ENCODE measurements at regions of chr12 and their contacts with region 1.

Region 1: DNA sequence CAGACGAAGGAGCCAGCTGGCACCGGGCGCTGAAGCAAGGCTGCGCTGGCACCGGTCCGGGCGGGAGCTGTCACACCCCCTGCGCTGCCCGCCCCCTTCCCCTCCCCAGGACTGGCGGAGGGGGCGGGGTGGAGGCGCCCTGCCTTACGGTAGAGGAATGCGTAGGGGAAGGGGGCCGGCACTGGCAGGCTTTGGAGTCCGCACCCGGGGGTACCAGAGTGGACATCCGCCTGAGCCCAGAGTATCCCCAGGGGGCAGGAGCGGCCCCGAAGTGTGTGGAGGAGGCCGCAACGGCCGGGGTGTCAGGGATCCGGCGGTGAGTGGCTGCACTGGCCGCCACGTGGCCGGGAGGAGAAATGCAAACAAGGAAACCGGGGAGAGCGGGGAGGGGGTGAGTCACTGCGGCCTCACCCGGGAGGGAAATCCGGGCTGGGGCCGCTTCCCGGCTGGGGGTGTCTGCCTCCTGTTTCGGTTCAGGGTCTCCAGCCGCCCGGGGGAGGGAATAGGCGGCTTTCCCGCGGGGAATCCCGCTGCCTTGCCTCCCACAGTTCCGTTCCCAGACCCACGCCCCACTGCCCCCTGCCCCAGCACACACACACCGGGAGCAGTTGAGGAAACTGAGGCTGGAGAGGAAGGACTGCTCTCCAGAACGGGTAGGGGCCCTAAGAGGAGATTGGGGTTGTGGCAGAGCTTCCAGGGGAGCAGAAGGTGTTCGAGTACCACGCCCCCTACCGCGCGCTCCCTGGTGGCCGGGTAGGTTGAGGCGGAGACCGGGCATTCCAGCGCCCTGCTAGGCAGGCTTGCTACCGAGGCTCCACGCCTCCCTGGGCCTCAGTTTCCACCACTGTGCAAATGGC is at the start of gene RAPGEF3:
- DNase-seq: no peak
- H3K4me3 ChIP-seq: peak within 1 kb of the TSS; percentile 53
- H3K27me3 ChIP-seq: no peaks in the 10 kb centered on the region
- CTCF ChIP-seq: peak; percentile 65
- polyA plus RNA-seq, gene RAPGEF3: 1.3 and 2.4 TPM in 2 replicates

Region 2: GRCh38 chr12:47715393-47715876 is 43.6 kb before region 1 on chr12:
- CTCF ChIA-PET with region 1: interaction called, 11 read pairs
- POLR2A ChIA-PET with region 1: no interaction called
- DNase-seq: no peak
- H3K4me3 ChIP-seq: no peak overlapping the region
- H3K27me3 ChIP-seq: no peaks in the 10 kb centered on the region
- CTCF ChIP-seq: peak; percentile 80

Region 3: DNA sequence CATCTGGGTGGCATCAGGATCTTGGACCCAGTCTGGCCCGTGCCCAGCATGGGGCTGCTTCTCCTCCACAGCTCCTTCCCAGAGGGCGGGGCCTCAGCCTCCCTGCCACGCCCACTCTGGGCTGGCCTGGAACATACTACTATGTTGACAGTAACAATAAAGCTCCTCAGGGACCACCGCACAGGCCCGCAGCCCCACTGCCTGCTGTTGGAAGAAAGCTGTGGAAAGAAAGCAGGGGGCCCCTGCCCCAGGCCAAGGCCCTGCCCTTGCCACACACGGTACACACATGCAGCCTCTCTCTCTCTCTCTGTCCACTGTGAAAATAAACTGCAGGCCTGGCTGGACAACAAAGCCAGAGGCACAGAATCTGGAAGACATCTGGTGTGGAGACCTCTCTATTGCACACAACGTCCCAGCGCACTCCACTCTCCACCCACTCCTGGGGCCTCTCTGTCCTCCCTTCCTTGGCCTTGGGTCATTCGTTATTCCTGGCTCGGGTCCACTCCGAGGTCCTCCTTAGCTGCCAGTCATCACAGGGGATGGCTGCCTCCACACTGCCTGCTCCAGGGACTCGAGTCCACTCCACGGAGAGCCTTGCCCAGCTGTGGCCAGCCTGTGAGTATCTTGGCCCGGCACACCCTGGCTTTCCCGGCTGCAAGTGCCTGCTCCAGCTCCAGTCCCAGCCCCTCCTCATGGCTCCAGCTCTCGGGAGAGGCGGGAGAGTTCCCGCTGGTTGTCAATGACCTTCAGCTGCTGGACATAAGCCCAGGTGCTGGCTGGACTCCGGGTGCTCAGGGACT is 22.0 kb before region 1 on chr12:
- CTCF ChIA-PET with region 1: interaction called, 107 read pairs
- POLR2A ChIA-PET with region 1: no interaction called
- DNase-seq: no peak
- H3K4me3 ChIP-seq: no peak overlapping the region
- H3K27me3 ChIP-seq: peaks cover 3% of the 10 kb centered on the region; the same call in 1 of the 2 replicates
- CTCF ChIP-seq: no peak

Region 4: GRCh38 chr12:47773062-47773857 is 14.2 kb after region 1 on chr12 and contains the start of gene SLC48A1:
- CTCF ChIA-PET with region 1: interaction called, 82 read pairs
- POLR2A ChIA-PET with region 1: no interaction called
- DNase-seq: no peak
- H3K4me3 ChIP-seq: peak within 1 kb of the TSS; percentile 63
- H3K27me3 ChIP-seq: no peaks in the 10 kb centered on the region; the same call in 1 of the 2 replicates
- CTCF ChIP-seq: peak; percentile 37
- polyA plus RNA-seq, gene SLC48A1: 11.4 and 16.6 TPM in 2 replicates